ENCODE measurements at regions of chr3 and their contacts with region 1.

Region 1: DNA sequence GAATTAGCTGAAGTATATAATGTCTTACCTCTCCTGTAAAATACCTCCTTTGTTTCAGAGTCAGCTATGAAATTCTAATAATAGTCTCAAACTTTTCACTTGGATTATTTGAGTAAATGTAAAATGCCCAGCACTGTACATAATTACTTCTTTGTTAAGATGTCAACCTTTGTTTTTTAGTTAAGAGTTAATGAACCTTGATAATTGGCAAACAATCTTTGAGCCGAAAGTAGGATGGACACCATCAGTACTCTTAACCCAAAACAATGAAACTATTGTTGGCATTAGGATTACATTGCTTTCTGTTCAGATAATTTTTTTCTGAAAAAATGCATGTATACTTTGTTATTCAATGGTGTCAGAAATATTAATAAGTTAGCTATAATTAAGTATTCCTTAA is 3.0 kb upstream of the NECTIN3 start:
- DNase-seq: no peak
- H3K4me3 ChIP-seq: no peak overlapping the region
- H3K4me3 Mint-ChIP-seq: peak overlapping the region in 1 of 7 donors; percentile 39
- H3K27ac ChIP-seq: no peak overlapping the region
- H3K27ac Mint-ChIP-seq: peak overlapping the region in 1 of 8 donors; percentile 13
- H3K4me1 ChIP-seq: peaks cover 12% of the 10 kb centered on the region
- H3K4me1 Mint-ChIP-seq: peaks cover 23 to 27% (median 26%) of the 10 kb centered on the region in 3 donors
- H3K27me3 ChIP-seq: no peaks in the 10 kb centered on the region
- H3K27me3 Mint-ChIP-seq: peaks cover 0 to 4% of the 10 kb centered on the region in 2 donors

Region 2: GRCh38 chr3:110955301-110955880 is 113.2 kb before region 1 on chr3:
- CTCF ChIA-PET with region 1: no interaction called
- POLR2A ChIA-PET with region 1: no interaction called
- DNase-seq: no peak
- H3K4me3 ChIP-seq: no peak overlapping the region
- H3K4me3 Mint-ChIP-seq: no peak overlapping the region
- H3K27ac ChIP-seq: no peak overlapping the region
- H3K27ac Mint-ChIP-seq: no peak overlapping the region
- H3K4me1 ChIP-seq: no peaks in the 10 kb centered on the region
- H3K4me1 Mint-ChIP-seq: no peaks in the 10 kb centered on the region
- H3K27me3 ChIP-seq: no peaks in the 10 kb centered on the region
- H3K27me3 Mint-ChIP-seq: peaks cover 0 to 3% of the 10 kb centered on the region in 2 donors

Region 3: DNA sequence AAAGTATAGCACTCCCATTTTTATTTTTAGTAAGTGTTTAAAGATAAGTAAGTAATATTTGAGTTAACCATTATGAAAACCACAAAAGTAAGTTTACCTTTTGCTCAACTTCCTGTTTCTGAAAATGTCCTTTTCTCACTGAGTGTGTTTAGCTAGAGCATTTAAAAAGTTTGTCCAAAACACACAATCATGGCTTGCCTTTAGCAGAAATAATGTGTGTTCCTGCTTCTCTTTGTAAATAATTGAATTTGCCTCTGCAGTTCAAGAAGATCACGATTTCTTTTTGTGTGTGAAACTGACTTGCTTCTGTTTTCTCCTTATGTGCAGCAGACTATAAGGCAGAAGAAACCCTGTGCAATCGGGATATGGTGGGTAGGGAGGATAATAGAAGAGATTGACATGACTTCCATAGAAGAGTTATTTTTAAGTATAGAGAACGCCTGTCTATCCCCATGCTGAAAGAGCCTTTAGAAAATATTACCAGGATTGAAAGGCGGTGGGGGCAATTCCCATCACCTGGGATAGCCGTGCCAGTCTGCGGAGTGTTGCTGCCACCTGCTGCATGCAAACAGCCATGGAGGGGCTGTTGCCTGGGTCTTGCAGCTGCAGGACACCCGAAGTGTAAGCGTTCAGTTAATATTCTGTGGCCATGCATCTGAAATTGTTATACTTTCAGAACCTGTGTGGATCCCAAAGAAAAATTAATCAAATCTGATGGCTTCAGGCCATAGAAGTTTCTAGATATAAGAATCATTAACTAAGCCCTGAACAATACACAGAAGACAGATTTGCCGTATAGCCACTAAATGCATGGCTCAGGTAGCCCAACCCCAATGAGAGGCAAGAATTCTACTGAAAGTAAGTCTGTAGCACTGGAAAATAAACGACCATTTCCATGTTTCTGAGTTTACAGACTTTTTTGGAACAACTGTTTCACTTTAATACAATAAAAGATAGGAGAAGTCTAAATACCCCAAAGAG is 471.1 kb after region 1 on chr3:
- CTCF ChIA-PET with region 1: interaction called, 11 read pairs
- POLR2A ChIA-PET with region 1: no interaction called
- DNase-seq: peak; percentile 44 to 77 (median 58)
- H3K4me3 ChIP-seq: peak overlapping the region; percentile 52
- H3K4me3 Mint-ChIP-seq: peak overlapping the region; percentile 72 to 88 (median 82)
- H3K27ac ChIP-seq: no peak overlapping the region
- H3K27ac Mint-ChIP-seq: peak overlapping the region in 7 of 8 donors; percentile 78 to 99 (median 93)
- H3K4me1 ChIP-seq: peaks cover 43% of the 10 kb centered on the region
- H3K4me1 Mint-ChIP-seq: peaks cover 48 to 71% (median 67%) of the 10 kb centered on the region in 3 donors
- H3K27me3 ChIP-seq: no peaks in the 10 kb centered on the region
- H3K27me3 Mint-ChIP-seq: no peaks in the 10 kb centered on the region